ENCODE measurements at regions of chr14 and their contacts with region 1.

Region 1: GRCh38 chr14:21104448-21105060 is 3.7 kb downstream of the TMEM253 start:
- DNase-seq: peak; percentile 43
- H3K4me3 ChIP-seq: peak overlapping the region; percentile 61
- CTCF ChIP-seq: peak; percentile 100

Region 2: DNA sequence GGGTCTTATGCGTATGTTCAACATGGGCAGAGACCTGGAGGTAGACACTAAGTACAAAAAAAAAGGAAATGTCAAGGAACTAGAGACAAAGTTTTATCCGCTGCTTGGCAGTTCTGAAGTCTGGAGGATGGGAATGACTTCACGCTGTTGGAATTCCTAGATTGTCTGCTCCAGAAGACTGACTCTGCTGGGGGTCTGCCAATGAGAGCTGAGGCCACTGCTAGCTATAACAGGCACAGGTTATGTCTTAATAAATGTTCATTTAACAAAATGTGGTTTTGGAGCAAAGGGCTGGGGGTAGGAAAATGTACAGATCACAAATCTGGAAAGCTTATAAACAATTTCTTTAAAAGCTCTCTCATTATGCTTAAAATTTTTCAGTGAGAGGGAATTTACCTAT is 41.1 kb before region 1 on chr14:
- in situ Hi-C with region 1: loop called (anchors 5 kb)
- DNase-seq: peak; percentile 70
- H3K4me3 ChIP-seq: no peak overlapping the region
- CTCF ChIP-seq: no peak

Region 3: GRCh38 chr14:21155963-21156362 is 51.4 kb after region 1 on chr14 and contains the start of gene OR5AU1:
- in situ Hi-C with region 1: loop called (anchors 5 kb)
- DNase-seq: no peak
- H3K4me3 ChIP-seq: no peak within 1 kb of the TSS
- CTCF ChIP-seq: no peak

Region 4: DNA sequence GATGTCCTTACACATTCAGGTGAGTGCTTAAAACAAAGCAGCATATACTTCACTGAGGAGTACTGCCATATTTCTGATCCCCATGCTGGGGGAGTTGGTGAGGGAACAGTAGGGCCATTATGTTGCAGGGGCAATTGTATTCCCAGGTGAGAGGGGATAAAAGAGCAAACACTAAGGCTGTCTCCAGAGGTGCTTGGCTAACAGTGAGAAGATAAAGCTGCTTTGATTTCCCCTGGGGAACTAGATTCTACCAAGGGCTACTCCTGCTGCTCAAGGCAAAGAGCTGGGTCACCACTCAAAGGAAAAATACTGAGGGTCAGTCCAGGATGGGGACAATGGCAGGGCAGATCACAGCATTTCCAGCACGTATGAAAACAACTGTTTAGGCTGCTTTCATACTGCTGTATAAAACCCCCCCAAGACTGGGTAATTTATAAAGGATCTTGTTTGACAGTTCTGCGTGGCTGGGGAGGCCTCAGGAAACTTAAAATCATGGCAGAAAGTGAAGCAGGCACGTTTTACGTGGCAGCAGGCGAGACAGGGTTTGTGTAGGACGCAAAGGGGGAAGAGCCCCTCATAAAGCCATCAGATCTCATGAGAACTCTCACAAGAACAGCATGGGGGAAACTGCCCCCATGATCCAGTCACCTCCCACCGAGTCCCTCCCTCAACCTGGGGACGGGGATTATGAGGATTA is 99.1 kb after region 1 on chr14:
- in situ Hi-C with region 1: no loop called
- DNase-seq: no peak
- H3K4me3 ChIP-seq: no peak overlapping the region
- CTCF ChIP-seq: no peak

Measured in astrocyte of the cerebellum (primary cell).